HEK293T (cell line): ENCODE measurements at regions of chr7 and their contacts with region 1.

Region 1: GRCh38 chr7:151226875-151227782 is at the start of gene ABCF2:
- DNase-seq: peak; percentile 100

Region 2: DNA sequence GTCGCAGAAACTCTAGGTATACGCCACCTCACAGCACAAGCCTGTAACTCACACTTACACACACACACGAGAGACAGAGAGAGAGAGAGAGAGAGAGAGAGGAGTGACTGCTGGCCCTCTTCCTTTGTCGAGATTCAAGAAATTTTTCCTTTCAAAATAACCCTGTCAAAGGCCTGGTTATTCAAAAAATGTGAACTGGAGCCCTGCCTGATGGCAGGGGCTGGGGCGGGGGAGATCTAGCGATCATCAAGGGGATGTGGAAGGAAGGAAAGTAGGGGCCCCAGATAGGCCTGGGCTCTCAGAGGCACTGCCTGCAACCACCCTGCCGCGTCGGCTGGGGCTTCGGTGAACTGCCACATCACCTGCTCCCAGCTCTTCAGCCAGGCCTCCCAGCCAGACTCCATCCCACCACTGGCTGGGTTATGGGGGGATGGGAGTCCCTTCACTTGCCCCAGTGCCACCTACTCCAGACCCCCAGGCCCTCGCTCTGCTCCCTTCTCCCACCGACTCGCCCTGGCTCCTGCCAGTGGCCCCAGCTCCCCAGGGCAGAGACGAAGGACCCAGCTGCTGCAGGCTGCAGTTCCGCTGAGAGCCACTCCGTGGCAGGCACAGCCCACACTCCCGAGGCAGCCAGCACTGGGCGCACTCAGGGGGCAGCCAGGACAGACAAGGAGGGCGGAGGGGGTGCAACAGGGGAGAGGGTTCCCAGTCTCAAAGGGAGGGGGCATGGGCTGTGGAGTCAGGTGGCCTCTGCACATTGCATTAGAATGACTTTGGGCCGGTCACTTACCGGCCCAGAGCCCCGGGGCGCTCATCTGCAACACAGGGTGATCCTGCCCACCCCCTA is 264.4 kb before region 1 on chr7:
- CTCF ChIA-PET with region 1: no interaction called
- POLR2A ChIA-PET with region 1: no interaction called
- DNase-seq: peak; percentile 92

Region 3: DNA sequence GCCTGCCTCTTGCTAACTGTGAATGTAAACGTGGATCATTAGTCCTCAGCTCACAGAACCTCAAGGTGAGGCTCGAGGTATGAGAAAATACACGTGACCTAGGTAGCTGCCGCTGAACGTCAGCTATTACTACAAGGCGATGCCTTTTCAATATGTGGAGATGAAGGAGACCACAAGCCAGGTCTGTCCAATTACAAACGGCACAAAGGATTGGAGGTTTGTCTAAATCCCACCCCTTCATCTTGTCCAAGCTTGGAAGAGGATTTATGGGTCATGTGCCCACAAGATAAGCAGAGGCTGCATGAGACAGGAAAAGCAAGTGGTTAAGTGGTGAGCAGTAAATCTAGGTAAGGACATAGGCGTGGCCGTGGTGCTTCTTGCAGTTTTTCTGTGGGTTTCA is 20.2 kb before region 1 on chr7:
- CTCF ChIA-PET with region 1: interaction called, 4 read pairs
- POLR2A ChIA-PET with region 1: interaction called, 90 read pairs
- DNase-seq: no peak

Region 4: DNA sequence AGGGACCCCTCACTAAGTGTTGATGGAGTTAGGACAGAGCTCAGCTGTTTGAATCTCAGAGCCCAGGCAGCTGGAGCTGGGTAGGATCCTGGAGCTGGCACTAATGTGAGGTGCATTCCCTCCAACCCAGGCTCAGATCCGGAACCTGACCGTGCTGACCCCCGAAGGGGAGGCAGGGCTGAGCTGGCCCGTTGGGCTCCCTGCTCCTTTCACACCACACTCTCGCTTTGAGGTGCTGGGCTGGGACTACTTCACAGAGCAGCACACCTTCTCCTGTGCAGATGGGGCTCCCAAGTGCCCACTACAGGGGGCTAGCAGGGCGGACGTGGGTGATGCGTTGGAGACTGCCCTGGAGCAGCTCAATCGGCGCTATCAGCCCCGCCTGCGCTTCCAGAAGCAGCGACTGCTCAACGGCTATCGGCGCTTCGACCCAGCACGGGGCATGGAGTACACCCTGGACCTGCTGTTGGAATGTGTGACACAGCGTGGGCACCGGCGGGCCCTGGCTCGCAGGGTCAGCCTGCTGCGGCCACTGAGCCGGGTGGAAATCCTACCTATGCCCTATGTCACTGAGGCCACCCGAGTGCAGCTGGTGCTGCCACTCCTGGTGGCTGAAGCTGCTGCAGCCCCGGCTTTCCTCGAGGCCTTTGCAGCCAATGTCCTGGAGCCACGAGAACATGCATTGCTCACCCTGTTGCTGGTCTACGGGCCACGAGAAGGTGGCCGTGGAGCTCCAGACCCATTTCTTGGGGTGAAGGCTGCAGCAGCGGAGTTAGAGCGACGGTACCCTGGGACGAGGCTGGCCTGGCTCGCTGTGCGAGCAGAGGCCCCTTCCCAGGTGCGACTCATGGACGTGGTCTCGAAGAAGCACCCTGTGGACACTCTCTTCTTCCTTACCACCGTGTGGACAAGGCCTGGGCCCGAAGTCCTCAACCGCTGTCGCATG is 10.4 kb after region 1 on chr7:
- CTCF ChIA-PET with region 1: no interaction called
- POLR2A ChIA-PET with region 1: interaction called, 36 read pairs
- DNase-seq: no peak